ENCODE measurements at regions of chr18 and their contacts with region 1.

Region 1: GRCh38 chr18:79975985-79976680 is 11.7 kb downstream of the HSBP1L1 start:
- DNase-seq: no peak
- ATAC-seq: no peak
- H3K4me3 ChIP-seq: no peak overlapping the region
- H3K27ac ChIP-seq: no peak overlapping the region
- H3K4me1 ChIP-seq: peaks cover 19% of the 10 kb centered on the region
- H3K27me3 ChIP-seq: no peaks in the 10 kb centered on the region
- CTCF ChIP-seq: no peak

Region 2: GRCh38 chr18:80147418-80148325 is 171.5 kb after region 1 on chr18:
- CTCF ChIA-PET with region 1: no interaction called
- POLR2A ChIA-PET with region 1: no interaction called
- in situ Hi-C with region 1: no loop called
- intact Hi-C with region 1: loop called (anchors 10 kb)
- DNase-seq: peak; percentile 84
- ATAC-seq: peak; percentile 96
- H3K4me3 ChIP-seq: peak overlapping the region; percentile 79 to 81
- H3K27ac ChIP-seq: peak overlapping the region; percentile 88
- H3K4me1 ChIP-seq: peaks cover 19% of the 10 kb centered on the region
- H3K27me3 ChIP-seq: no peaks in the 10 kb centered on the region
- CTCF ChIP-seq: no peak

Region 3: DNA sequence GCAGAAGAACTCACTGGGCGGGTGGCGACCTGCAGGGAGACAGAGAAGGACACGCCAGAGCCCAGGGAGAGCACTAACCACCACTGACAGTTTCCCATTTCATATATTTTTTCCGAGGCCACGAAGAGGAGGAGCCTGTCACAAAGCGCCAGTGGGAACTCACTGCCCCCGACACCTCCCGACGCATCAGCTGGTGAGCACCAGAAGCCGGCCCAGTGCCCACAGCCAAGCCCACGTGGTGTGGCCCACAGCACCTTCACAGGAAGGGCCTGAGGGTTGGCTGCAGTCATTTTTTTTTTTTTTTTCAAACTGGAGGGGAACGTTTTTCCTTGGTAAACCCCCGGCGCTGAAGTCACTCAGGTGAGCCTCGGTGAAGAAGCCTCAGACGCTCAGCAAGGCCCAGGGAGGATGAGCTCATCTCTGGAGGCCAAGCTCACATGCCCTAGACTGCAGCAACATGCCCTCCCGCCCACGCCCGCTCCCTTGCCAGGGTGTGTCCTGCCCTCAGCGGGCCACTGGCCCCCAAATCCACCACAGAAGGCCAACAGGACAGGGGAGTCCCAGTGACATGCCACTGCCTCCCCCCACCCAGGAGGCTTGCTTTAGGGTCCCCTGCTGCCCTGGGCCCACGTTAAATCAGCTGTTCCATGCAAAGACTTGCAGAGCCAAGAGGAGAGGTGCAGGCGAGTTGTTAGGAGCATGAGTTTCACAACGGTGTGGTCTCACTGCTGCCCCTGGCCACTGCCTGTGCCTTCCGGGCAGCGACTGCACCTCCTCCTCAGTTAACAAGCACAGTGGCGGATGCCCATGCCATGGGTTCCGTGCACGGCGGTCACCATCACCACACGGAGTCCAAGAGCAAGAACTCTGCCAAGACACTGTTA is 203.0 kb after region 1 on chr18:
- CTCF ChIA-PET with region 1: no interaction called
- POLR2A ChIA-PET with region 1: interaction called, 10 read pairs
- in situ Hi-C with region 1: no loop called
- intact Hi-C with region 1: no loop called
- DNase-seq: no peak
- ATAC-seq: no peak
- H3K4me3 ChIP-seq: no peak overlapping the region
- H3K27ac ChIP-seq: no peak overlapping the region
- H3K4me1 ChIP-seq: 0 out of 2 replicates have a peak, but pooled peaks cover 6% of the 10 kb centered on the region
- H3K27me3 ChIP-seq: no peaks in the 10 kb centered on the region
- CTCF ChIP-seq: no peak

Measured in Panc1 (cell line).